CD4-positive, alpha-beta T cell (primary cell): ENCODE measurements at regions of chr2 and their contacts with region 1.

Region 1: DNA sequence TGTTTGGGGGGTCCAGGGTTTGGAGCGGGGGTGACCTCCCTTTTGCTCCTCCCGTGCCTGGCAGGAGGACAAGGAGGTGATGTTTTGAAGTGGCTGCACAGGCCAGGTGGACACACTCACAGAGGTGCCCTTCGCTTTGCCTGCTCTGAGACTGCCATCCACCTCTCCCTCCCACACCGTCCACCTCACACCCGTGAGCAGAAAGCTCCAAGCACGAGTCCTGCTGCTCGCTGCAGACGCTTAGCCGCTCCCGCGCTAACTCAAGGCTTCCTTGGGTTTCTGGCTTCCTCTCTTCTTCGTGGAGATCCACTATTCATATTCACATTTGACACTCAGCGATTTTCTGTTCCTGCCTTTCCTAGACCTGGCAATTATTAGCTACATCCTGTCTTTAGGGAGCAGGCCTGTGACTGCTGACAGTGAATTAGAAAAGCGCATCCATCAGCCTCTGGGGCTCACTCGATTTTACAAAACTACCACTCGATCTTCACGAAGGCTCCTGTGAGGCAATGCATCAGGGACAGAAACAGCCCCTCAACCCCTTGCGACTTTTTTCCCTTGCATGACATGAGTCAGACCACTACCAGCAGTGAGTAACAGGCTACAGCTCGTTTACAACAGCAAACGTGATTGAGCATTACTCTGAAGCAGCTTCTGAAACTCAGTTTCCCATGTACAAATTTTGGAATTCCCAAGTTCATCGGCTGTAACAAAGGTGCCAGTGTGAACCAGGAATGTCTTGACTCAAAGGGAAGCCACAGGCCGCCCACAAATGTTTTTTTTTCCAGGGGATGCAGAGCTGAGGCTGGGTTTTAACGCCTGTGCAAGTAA is 238.7 kb upstream of the SOX11 start:
- DNase-seq: no peak
- ATAC-seq: no peak
- H3K4me3 ChIP-seq: no peak overlapping the region
- H3K4me3 Mint-ChIP-seq: no peak overlapping the region
- H3K27ac ChIP-seq: no peak overlapping the region
- H3K27ac Mint-ChIP-seq: no peak overlapping the region
- H3K4me1 ChIP-seq: no peaks in the 10 kb centered on the region
- H3K4me1 Mint-ChIP-seq: no peaks in the 10 kb centered on the region
- H3K27me3 ChIP-seq: no peaks in the 10 kb centered on the region
- H3K27me3 Mint-ChIP-seq: no peaks in the 10 kb centered on the region
- CTCF ChIP-seq: no peak

Region 2: GRCh38 chr2:5026552-5027234 is 426.7 kb before region 1 on chr2:
- CTCF ChIA-PET with region 1: no interaction called
- POLR2A ChIA-PET with region 1: no interaction called
- intact Hi-C with region 1: no loop called
- DNase-seq: no peak
- ATAC-seq: no peak
- H3K4me3 ChIP-seq: no peak overlapping the region
- H3K4me3 Mint-ChIP-seq: no peak overlapping the region
- H3K27ac ChIP-seq: no peak overlapping the region
- H3K27ac Mint-ChIP-seq: no peak overlapping the region
- H3K4me1 ChIP-seq: no peaks in the 10 kb centered on the region
- H3K4me1 Mint-ChIP-seq: no peaks in the 10 kb centered on the region
- H3K27me3 ChIP-seq: no peaks in the 10 kb centered on the region
- H3K27me3 Mint-ChIP-seq: no peaks in the 10 kb centered on the region
- CTCF ChIP-seq: no peak

Region 3: DNA sequence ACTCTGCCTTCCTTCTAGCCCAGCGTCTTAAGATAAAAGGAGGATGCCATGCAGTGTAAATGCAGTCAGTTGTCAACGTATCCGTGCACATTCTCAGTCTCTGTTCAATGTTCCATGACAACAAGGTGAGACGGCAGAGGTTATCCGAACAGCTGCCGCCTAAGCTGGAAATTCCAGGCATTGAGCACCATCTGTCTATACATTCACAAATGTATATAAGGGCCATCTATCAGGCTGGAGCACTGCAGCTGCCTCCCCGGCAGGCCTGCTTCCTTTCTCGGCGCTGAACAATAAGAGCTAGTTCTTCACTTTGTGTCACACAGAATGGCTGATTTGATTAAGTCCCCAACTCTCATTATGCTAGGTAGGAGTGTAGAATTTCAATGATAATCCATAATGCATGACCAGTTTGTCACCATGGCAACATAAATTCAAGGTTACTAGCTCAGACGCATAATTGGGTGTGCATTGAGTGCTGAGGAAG is 43.5 kb before region 1 on chr2:
- CTCF ChIA-PET with region 1: no interaction called
- POLR2A ChIA-PET with region 1: no interaction called
- intact Hi-C with region 1: loop called in 1 of 2 experiments (anchors 2 kb)
- DNase-seq: no peak
- ATAC-seq: no peak
- H3K4me3 ChIP-seq: no peak overlapping the region
- H3K4me3 Mint-ChIP-seq: no peak overlapping the region
- H3K27ac ChIP-seq: no peak overlapping the region
- H3K27ac Mint-ChIP-seq: no peak overlapping the region
- H3K4me1 ChIP-seq: no peaks in the 10 kb centered on the region
- H3K4me1 Mint-ChIP-seq: no peaks in the 10 kb centered on the region
- H3K27me3 ChIP-seq: no peaks in the 10 kb centered on the region
- H3K27me3 Mint-ChIP-seq: no peaks in the 10 kb centered on the region
- CTCF ChIP-seq: no peak